ENCODE measurements at regions of chr2 and their contacts with region 1.

Region 1: DNA sequence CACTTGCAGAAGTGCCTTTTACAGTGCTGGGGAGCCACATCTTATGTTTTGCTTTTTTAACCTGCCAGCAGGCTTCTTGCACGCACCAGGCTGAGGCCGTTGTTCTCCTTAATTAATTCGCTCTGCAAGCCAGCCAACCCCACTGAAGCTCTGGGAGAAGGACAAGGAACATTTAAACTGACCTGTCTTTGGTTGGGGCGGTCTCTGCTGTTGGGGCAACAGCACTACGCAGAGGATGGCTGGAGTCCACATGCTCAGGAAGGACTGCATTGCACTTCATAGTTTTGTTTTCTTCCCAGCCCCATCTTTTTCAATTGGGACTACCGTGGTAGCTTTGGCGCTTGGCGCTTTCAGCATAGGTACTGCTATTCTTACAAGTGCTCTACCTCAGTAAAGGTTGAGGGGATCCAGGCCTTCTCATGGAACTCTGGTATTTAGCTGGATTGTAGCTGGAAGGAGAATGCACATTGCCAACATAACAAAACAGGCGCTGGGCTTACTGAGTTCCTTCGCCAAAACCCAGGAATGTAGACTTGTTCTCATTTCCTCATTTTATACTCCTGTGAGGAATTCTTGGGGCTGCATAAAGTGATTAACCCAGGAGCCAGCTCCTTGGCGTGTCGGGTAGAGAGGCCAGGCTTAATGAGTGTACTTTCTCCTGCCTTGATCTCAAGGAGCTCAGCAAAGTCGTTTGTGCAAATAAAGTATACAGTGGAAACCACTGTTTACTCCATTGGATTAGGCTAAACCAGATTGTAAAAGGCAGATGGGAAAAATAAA is 146.2 kb downstream of the PRKCE start:
- DNase-seq: peak in 1 of 5 donors; percentile 5
- ATAC-seq: no peak
- H3K4me3 ChIP-seq: no peak overlapping the region
- H3K27ac ChIP-seq: no peak overlapping the region
- H3K4me1 ChIP-seq: peaks cover 0 to 23% (median 13%) of the 10 kb centered on the region in 12 donors
- H3K27me3 ChIP-seq: no peaks in the 10 kb centered on the region
- CTCF ChIP-seq: no peak
- POLR2A ChIP-seq: no peak

Region 2: GRCh38 chr2:45851613-45852304 is 54.1 kb after region 1 on chr2:
- intact Hi-C with region 1: loop called in 1 of 10 experiments (anchors 5 kb)
- DNase-seq: peak in 1 of 5 donors; percentile 49
- ATAC-seq: peak in 3 of 4 donors; percentile 20 to 66 (median 65)
- H3K4me3 ChIP-seq: no peak overlapping the region
- H3K27ac ChIP-seq: no peak overlapping the region
- H3K4me1 ChIP-seq: peaks cover 0 to 40% (median 12%) of the 10 kb centered on the region in 12 donors
- H3K27me3 ChIP-seq: no peaks in the 10 kb centered on the region
- CTCF ChIP-seq: no peak
- POLR2A ChIP-seq: no peak